CD14-positive monocyte (primary cell): ENCODE measurements at regions of chr1 and their contacts with region 1.

Region 1: GRCh38 chr1:165597883-165598675 is 33.0 kb upstream of the MGST3 start:
- DNase-seq: peak; percentile 95 to 98 (median 97)
- H3K4me3 ChIP-seq: peak overlapping the region; percentile 39 to 76 (median 58)
- H3K4me3 Mint-ChIP-seq: peak overlapping the region; percentile 91 to 97
- H3K27ac ChIP-seq: peak overlapping the region in 1 of 2 donors; percentile 80
- H3K27ac Mint-ChIP-seq: peak overlapping the region; percentile 57 to 93 (median 87)
- H3K4me1 ChIP-seq: peaks cover 24% of the 10 kb centered on the region in 2 donors
- H3K4me1 Mint-ChIP-seq: peaks cover 35% of the 10 kb centered on the region
- H3K27me3 ChIP-seq: peaks cover 37 to 44% of the 10 kb centered on the region in 2 donors
- H3K27me3 Mint-ChIP-seq: peaks cover 44 to 60% (median 45%) of the 10 kb centered on the region in 3 donors
- CTCF ChIP-seq: no peak

Region 2: GRCh38 chr1:165257969-165258459 is 340.1 kb before region 1 on chr1:
- intact Hi-C with region 1: loop called in 1 of 2 experiments (anchors 5 kb)
- DNase-seq: peak; percentile 2 to 32 (median 12)
- H3K4me3 ChIP-seq: no peak overlapping the region
- H3K4me3 Mint-ChIP-seq: no peak overlapping the region
- H3K27ac ChIP-seq: no peak overlapping the region
- H3K27ac Mint-ChIP-seq: no peak overlapping the region
- H3K4me1 ChIP-seq: no peaks in the 10 kb centered on the region
- H3K4me1 Mint-ChIP-seq: no peaks in the 10 kb centered on the region
- H3K27me3 ChIP-seq: no peaks in the 10 kb centered on the region
- H3K27me3 Mint-ChIP-seq: peaks cover 5 to 10% (median 6%) of the 10 kb centered on the region in 3 donors
- CTCF ChIP-seq: peak; percentile 84

Region 3: GRCh38 chr1:165392634-165393571 is 205.2 kb before region 1 on chr1:
- intact Hi-C with region 1: loop called in 1 of 2 experiments (anchors 2 kb)
- DNase-seq: peak; percentile 90 to 95 (median 90)
- H3K4me3 ChIP-seq: peak overlapping the region in 1 of 3 experiments; percentile 36
- H3K4me3 Mint-ChIP-seq: peak overlapping the region; percentile 55 to 79
- H3K27ac ChIP-seq: no peak overlapping the region
- H3K27ac Mint-ChIP-seq: peak overlapping the region in 4 of 7 donors; percentile 54 to 82 (median 68)
- H3K4me1 ChIP-seq: peaks cover 15 to 17% of the 10 kb centered on the region in 2 donors
- H3K4me1 Mint-ChIP-seq: peaks cover 21% of the 10 kb centered on the region
- H3K27me3 ChIP-seq: peaks cover 87 to 96% of the 10 kb centered on the region in 2 donors
- H3K27me3 Mint-ChIP-seq: peaks cover 89 to 97% (median 96%) of the 10 kb centered on the region in 3 donors
- CTCF ChIP-seq: peak; percentile 97

Region 4: GRCh38 chr1:165630629-165631341 is 32.7 kb after region 1 on chr1 and contains the start of gene MGST3:
- intact Hi-C with region 1: loop called in 1 of 2 experiments (anchors 5 kb)
- DNase-seq: peak; percentile 90 to 93 (median 92)
- H3K4me3 ChIP-seq: peak within 1 kb of the TSS; percentile 75 to 90 (median 83)
- H3K4me3 Mint-ChIP-seq: no peak within 1 kb of the TSS
- H3K27ac ChIP-seq: peak within 1 kb of the TSS; percentile 89 to 94
- H3K27ac Mint-ChIP-seq: no peak within 1 kb of the TSS
- H3K4me1 ChIP-seq: peaks cover 42 to 61% of the 10 kb centered on the region in 2 donors
- H3K4me1 Mint-ChIP-seq: peaks cover 39% of the 10 kb centered on the region
- H3K27me3 ChIP-seq: no peaks in the 10 kb centered on the region
- H3K27me3 Mint-ChIP-seq: no peaks in the 10 kb centered on the region
- CTCF ChIP-seq: no peak
- polyA plus RNA-seq, gene MGST3: 57.9 to 228 (median 189) TPM

Region 5: DNA sequence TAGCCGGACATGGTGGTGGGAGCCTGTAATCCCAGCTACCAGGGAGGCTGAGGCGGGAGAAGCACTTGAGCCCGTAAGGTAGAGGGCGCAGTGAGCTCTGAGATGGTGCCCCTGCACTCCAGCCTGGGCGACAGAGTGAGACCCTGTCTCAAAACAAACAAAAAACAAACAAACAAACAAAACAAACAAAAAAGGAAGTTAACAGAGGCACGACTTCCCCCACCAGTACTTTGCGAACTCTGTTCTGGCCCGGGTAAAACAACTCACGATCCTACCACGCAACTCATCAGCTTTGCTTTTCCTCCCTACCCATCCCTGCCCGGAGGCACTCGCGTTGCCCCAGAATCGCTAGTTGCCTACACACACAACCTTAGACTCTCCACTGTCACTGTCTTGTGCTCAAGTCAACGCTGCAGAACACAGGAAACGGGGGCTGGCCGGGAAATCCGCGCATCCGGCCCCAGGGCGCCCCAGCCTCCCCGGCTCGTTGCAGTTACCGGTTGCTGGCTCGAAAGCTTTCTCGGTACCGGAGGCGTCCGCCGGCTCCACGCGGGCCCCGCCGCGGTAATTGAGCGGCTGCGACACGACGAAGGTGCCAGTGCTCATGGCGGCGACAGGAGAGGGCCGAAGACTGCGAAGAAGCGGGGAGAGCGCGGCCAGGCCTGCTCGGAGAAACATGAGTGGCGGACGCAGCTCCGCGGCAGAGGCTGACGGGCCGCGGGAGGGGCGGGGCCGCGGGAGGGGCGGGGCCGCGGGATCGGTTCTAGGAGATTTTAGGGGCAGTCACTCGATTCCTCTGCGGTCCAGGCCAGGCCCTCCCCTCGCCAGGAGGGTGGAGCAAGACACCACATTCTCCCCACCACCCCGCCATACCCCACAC is 100.0 kb after region 1 on chr1 and contains the start of gene ALDH9A1:
- intact Hi-C with region 1: loop called in 1 of 2 experiments (anchors 5 kb)
- DNase-seq: peak; percentile 51 to 68 (median 57)
- H3K4me3 ChIP-seq: peak within 1 kb of the TSS; percentile 81 to 99 (median 89)
- H3K4me3 Mint-ChIP-seq: peak within 1 kb of the TSS; percentile 94 to 98
- H3K27ac ChIP-seq: peak within 1 kb of the TSS; percentile 91 to 93
- H3K27ac Mint-ChIP-seq: peak within 1 kb of the TSS; percentile 90 to 97 (median 96)
- H3K4me1 ChIP-seq: peaks cover 27 to 32% of the 10 kb centered on the region in 2 donors
- H3K4me1 Mint-ChIP-seq: peaks cover 30% of the 10 kb centered on the region
- H3K27me3 ChIP-seq: no peaks in the 10 kb centered on the region
- H3K27me3 Mint-ChIP-seq: peaks cover 0 to 3% (median 0%) of the 10 kb centered on the region in 3 donors
- CTCF ChIP-seq: peak; percentile 19
- polyA plus RNA-seq, gene ALDH9A1: 23.7 to 60.0 (median 57.7) TPM

Region 6: GRCh38 chr1:165898837-165899236 is 300.8 kb after region 1 on chr1:
- intact Hi-C with region 1: no loop called
- DNase-seq: no peak
- H3K4me3 ChIP-seq: no peak overlapping the region
- H3K4me3 Mint-ChIP-seq: no peak overlapping the region
- H3K27ac ChIP-seq: peak overlapping the region in 1 of 2 donors; percentile 29
- H3K27ac Mint-ChIP-seq: peak overlapping the region in 2 of 7 donors; percentile 3 to 12
- H3K4me1 ChIP-seq: no peaks in the 10 kb centered on the region
- H3K4me1 Mint-ChIP-seq: peaks cover 3% of the 10 kb centered on the region
- H3K27me3 ChIP-seq: no peaks in the 10 kb centered on the region
- H3K27me3 Mint-ChIP-seq: no peaks in the 10 kb centered on the region
- CTCF ChIP-seq: no peak

Region 7: DNA sequence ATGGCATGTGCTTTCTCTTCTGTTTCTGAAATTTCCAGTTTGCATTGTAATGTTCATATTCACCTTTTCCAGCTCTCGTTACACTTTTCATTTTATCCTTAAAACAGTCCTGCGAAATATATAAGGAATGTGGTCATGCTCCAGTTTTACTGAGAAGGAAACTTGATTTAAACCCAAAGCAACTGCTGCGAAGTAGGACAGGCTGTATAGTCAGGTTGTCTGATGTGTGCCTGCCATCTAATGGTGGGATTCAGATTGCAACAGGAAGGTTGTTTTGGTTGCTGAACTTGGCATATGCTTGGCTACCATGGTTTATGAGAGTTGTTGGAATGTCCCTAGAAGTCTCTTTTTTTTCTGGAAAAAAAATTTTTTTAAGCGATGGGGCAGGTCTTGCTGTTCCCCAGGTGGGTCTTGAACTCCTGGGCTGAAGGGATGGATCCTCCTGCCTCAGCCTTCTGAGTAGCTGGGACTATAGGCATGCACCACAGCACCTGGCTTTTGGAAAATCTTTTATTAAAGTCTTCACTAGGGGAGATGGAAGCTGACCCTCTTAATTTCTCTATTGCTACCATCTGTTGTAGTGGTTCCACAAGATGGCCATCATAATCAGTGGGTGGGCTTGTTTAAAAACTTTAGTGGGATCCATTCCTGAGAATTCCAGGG is 316.2 kb after region 1 on chr1:
- intact Hi-C with region 1: loop called (anchors 2 to 5 kb)
- DNase-seq: peak; percentile 60 to 70 (median 66)
- H3K4me3 ChIP-seq: no peak overlapping the region
- H3K4me3 Mint-ChIP-seq: no peak overlapping the region
- H3K27ac ChIP-seq: no peak overlapping the region
- H3K27ac Mint-ChIP-seq: no peak overlapping the region
- H3K4me1 ChIP-seq: no peaks in the 10 kb centered on the region
- H3K4me1 Mint-ChIP-seq: peaks cover 9% of the 10 kb centered on the region
- H3K27me3 ChIP-seq: peaks cover 0 to 2% of the 10 kb centered on the region in 2 donors
- H3K27me3 Mint-ChIP-seq: peaks cover 0 to 1% (median 0%) of the 10 kb centered on the region in 3 donors
- CTCF ChIP-seq: peak; percentile 85